Ascending aorta (tissue), 2 donors: ENCODE measurements at regions of chr20 and their contacts with region 1.

Region 1: GRCh38 chr20:19779634-19780033 is 21.6 kb downstream of the RIN2 start:
- DNase-seq: peak in 1 of 2 donors; percentile 19
- H3K4me3 ChIP-seq: no peak overlapping the region
- H3K27ac ChIP-seq: no peak overlapping the region
- H3K4me1 ChIP-seq: peaks cover 6 to 25% of the 10 kb centered on the region in 2 donors
- H3K27me3 ChIP-seq: no peaks in the 10 kb centered on the region
- CTCF ChIP-seq: no peak

Region 2: DNA sequence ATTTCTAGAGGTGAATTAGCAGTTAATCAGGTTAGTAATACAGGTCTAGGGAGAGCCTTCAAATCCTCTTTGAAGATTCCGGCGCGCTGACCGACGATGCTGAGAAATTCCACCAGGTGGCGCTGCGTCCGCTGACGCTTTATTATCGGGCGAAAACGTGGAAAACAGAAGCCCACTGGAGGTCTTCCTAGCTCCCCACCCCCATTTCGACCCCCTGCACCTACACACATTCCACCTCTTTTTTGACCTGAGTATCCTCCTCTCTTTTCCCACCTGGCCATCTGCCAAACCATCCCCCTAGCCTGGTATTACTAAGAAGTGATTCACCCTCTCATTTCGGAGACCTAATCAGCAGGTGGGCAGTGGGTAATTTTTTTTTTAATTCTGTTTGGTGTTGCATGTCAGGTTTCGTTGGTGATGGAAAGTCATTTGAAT is 86.9 kb before region 1 on chr20:
- intact Hi-C with region 1: loop called (anchors 2 kb)
- DNase-seq: peak in 1 of 2 donors; percentile 76
- H3K4me3 ChIP-seq: peak overlapping the region in 1 of 2 donors; percentile 31
- H3K27ac ChIP-seq: no peak overlapping the region
- H3K4me1 ChIP-seq: peaks cover 2 to 11% of the 10 kb centered on the region in 2 donors
- H3K27me3 ChIP-seq: no peaks in the 10 kb centered on the region
- CTCF ChIP-seq: peak; percentile 75 to 90 (median 89)